Common myeloid progenitor, CD34-positive (primary cell): ENCODE measurements at regions of chr2 and their contacts with region 1.

Region 1: GRCh38 chr2:231463698-231464575 is at the start of gene NCL:
- DNase-seq: peak; percentile 98 to 99 (median 99)
- H3K4me3 ChIP-seq: peak within 1 kb of the TSS; percentile 74 to 93 (median 82)
- H3K27ac ChIP-seq: peak within 1 kb of the TSS; percentile 95 to 98
- H3K4me1 ChIP-seq: peaks cover 11 to 42% (median 33%) of the 10 kb centered on the region in 4 experiments
- H3K27me3 ChIP-seq: no peaks in the 10 kb centered on the region

Region 2: DNA sequence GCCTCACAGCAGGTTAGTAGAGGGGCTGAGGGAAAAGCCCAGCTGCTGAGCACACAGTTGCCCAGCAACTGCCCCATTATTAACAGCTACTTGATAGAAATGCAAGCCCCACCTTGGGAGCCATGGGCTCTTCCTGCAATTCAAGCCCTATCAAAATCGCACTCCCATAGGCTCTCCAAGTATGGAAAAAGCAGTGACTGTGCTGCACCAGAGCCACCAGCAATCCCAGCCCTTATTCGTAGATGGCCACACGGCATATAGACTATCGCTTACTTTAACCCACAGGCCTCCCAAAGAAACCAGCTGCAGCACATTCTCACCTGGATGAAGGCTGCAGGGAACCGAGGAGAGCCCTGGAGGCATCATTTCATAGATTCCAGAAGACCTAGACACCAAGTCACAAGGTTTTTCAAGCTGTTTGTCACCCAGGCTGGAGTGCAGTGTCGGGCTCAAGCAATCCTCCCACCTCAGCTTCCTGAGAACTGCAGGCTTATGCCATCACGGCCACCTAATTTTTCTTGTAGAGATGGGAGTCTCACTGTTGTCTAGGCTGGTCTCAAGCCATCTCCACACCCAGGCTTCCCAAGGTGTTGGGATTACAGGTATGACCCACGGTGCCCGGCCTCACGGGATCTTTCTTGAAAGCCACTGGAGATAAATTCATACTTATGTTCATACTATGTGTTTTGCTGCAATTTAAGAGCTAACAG is 11.0 kb before region 1 on chr2:
- CTCF ChIA-PET with region 1: interaction called, 8 read pairs
- POLR2A ChIA-PET with region 1: interaction called, 38 read pairs
- DNase-seq: peak in 2 of 3 donors; percentile 20 to 24
- H3K4me3 ChIP-seq: no peak overlapping the region
- H3K27ac ChIP-seq: no peak overlapping the region
- H3K4me1 ChIP-seq: peaks cover 0 to 2% (median 0%) of the 10 kb centered on the region in 4 experiments
- H3K27me3 ChIP-seq: no peaks in the 10 kb centered on the region

Region 3: DNA sequence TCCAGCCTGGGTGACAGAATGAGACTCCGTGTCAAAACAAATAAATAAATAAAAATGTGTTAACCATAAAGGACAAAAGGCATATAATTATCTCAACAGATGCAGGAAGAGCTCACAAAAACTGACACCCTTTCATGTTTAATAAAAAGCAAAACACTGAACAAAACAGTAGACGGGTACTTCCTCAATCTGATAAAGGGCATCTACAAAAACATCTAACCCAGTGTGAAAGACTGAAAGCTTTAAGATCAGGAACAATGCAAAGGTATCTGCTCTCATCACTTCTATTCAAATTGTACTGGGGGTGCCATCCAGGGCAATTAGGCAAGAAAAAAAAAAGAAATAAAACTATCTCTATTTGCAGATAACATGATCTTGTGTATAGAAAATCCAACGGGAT is 12.0 kb after region 1 on chr2:
- CTCF ChIA-PET with region 1: interaction called, 71 read pairs
- POLR2A ChIA-PET with region 1: interaction called, 11 read pairs
- DNase-seq: peak in 2 of 3 donors; percentile 32 to 41
- H3K4me3 ChIP-seq: no peak overlapping the region
- H3K27ac ChIP-seq: no peak overlapping the region
- H3K4me1 ChIP-seq: peaks cover 0 to 5% (median 0%) of the 10 kb centered on the region in 4 experiments
- H3K27me3 ChIP-seq: no peaks in the 10 kb centered on the region

Region 4: GRCh38 chr2:231612179-231613053 is 148.5 kb after region 1 on chr2:
- CTCF ChIA-PET with region 1: no interaction called
- POLR2A ChIA-PET with region 1: no interaction called
- DNase-seq: peak; percentile 89 to 94 (median 93)
- H3K4me3 ChIP-seq: peak overlapping the region in 2 of 7 experiments; percentile 68 to 78
- H3K27ac ChIP-seq: peak overlapping the region; percentile 94 to 96
- H3K4me1 ChIP-seq: peaks cover 3 to 63% (median 55%) of the 10 kb centered on the region in 4 experiments
- H3K27me3 ChIP-seq: no peaks in the 10 kb centered on the region